ENCODE measurements at regions of chr21 and their contacts with region 1.

Region 1: DNA sequence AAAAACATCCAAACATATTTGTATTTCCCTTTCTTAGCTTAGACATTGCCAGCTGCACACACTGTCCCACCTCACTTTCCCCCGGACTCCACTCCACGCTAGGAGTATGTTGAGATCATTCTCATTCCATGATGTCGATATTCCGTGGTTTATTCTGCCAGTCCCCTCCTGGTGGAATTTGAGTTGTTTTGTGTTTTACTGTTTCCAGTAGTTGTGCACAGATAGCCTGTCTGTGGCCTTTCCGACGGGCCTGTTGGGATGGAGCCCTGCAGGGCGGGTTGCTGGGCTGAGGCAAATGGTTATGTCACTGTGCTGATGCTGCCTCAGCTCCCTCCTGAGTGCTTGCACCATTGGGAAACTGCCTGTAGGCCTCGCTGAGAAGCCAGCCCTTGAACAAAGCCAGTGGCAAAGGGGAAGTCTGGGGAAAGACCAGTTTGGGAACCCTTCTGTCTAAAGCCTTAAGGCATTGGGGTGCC is 12.8 kb downstream of the TRAPPC10 start:
- DNase-seq: peak in 2 of 4 donors; percentile 19 to 63
- ATAC-seq: peak; percentile 89
- H3K4me3 ChIP-seq: no peak overlapping the region
- H3K27ac ChIP-seq: peak overlapping the region; percentile 33 to 40
- H3K4me1 ChIP-seq: peaks cover 22 to 66% of the 10 kb centered on the region in 2 donors
- H3K27me3 ChIP-seq: no peaks in the 10 kb centered on the region
- CTCF ChIP-seq: no peak

Region 2: DNA sequence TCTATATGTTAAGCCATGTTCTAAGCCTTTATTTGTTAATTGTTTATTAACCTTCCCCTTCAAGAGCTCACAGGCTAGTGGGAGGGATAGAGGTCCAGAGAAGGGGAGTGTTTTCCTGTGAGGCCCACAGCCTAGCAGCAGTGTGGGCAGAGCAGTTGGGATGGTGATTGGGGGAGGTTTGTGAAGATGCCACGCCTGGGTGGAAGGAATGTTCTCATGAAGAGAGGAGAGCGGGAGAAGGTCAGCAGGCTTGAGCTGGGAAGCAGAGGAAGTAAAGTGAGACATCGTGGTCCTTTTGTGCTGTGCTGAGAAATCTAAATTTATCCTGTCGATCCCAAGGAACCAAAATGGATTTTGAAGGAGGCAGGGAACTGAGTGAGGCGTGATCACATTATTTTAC is 29.8 kb after region 1 on chr21:
- intact Hi-C with region 1: loop called in 1 of 2 experiments (anchors 5 kb)
- DNase-seq: no peak
- ATAC-seq: peak; percentile 30
- H3K4me3 ChIP-seq: no peak overlapping the region
- H3K27ac ChIP-seq: no peak overlapping the region
- H3K4me1 ChIP-seq: peaks cover 19 to 29% of the 10 kb centered on the region in 2 donors
- H3K27me3 ChIP-seq: no peaks in the 10 kb centered on the region
- CTCF ChIP-seq: no peak

Measured in left lung (tissue), 14 donors.